ENCODE measurements at regions of chr15 and their contacts with region 1.

Region 1: GRCh38 chr15:83248151-83249029 is 36.1 kb downstream of the BNC1 start:
- DNase-seq: peak; percentile 78
- H3K4me3 ChIP-seq: no peak overlapping the region
- H3K27ac ChIP-seq: no peak overlapping the region
- H3K4me1 ChIP-seq: no peaks in the 10 kb centered on the region
- H3K27me3 ChIP-seq: peaks cover 10 to 16% of the 10 kb centered on the region in 2 experiments
- CTCF ChIP-seq: peak; percentile 54 to 66
- POLR2A ChIP-seq: no peak

Region 2: DNA sequence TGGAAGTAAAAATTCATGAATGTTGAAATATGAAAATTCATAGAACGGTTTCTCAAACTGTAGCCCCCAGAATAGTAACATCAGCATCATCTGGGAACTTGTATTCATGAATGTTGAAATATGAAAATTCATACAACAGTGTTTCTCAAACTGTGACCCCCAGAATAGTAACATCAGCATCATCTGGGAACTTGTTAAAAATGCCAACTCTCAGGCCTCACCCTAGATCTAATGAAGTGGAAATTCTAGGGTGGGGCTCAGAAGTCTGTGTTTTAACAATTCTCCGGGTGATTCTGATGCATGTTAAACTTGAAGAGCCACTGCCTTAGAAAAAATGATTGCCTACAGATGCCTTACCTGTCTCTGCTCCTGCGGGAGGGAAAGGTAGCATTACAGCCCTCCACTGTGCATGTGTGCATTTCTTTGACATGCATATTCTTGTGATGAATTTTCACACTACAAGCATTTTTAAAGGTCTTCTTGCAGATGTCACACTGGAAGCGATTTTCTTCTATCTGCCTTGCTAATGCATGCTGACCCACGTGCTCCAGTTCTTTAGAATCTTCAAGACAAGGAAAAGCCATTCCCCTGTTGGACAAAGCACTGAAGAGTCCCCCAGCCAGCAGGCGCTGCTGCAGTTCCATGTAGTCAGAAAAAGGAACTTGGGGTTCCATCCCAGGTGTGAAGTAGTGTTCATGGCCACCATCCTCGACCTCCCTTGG is 14.4 kb after region 1 on chr15:
- CTCF ChIA-PET with region 1: interaction called, 25 read pairs
- POLR2A ChIA-PET with region 1: no interaction called
- dilution Hi-C with region 1: no loop called
- intact Hi-C with region 1: no loop called
- DNase-seq: no peak
- H3K4me3 ChIP-seq: no peak overlapping the region
- H3K27ac ChIP-seq: no peak overlapping the region
- H3K4me1 ChIP-seq: no peaks in the 10 kb centered on the region
- H3K27me3 ChIP-seq: no peaks in the 10 kb centered on the region
- CTCF ChIP-seq: no peak
- POLR2A ChIP-seq: no peak

Region 3: DNA sequence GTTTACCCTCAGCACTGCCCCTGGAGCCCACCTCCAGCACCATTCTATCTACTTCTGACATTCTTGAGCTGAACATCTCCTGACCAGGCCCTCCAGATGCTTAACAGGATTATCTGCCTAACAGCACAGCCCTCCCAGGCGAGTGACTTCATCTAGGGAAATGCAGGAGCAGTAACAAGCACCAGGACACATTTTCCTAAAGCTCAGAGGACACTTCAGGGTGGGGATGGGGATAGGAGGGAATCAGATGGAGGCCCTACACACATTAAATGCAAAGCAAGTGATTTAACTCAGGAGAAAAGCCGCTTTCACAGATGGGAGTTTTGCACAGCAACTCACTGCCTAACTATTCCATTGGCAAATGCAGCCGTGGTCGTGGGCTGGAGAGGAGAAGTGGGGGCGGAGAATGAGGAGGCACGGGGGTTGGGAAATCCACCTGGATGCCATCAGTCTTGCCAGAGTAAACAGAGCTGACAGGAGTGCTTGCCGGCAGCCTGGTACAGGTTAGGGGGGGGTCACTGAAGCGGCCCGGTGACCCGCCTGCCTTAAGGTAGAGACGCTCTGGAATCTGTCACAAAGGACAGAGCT is 57.4 kb after region 1 on chr15:
- CTCF ChIA-PET with region 1: interaction called, 23 read pairs
- POLR2A ChIA-PET with region 1: no interaction called
- dilution Hi-C with region 1: no loop called
- intact Hi-C with region 1: no loop called
- DNase-seq: no peak
- H3K4me3 ChIP-seq: no peak overlapping the region
- H3K27ac ChIP-seq: no peak overlapping the region
- H3K4me1 ChIP-seq: peaks cover 8% of the 10 kb centered on the region
- H3K27me3 ChIP-seq: no peaks in the 10 kb centered on the region
- CTCF ChIP-seq: no peak
- POLR2A ChIP-seq: no peak

Region 4: GRCh38 chr15:83380682-83381081 is 132.3 kb after region 1 on chr15:
- CTCF ChIA-PET with region 1: interaction called, 108 read pairs
- POLR2A ChIA-PET with region 1: no interaction called
- dilution Hi-C with region 1: no loop called
- intact Hi-C with region 1: loop called (anchors 1 kb)
- DNase-seq: peak; percentile 34
- H3K4me3 ChIP-seq: no peak overlapping the region
- H3K27ac ChIP-seq: no peak overlapping the region
- H3K4me1 ChIP-seq: no peaks in the 10 kb centered on the region
- H3K27me3 ChIP-seq: peaks cover 5 to 16% of the 10 kb centered on the region in 2 experiments
- CTCF ChIP-seq: peak; percentile 23 to 50
- POLR2A ChIP-seq: no peak

Region 5: GRCh38 chr15:83446904-83447709 is 198.7 kb after region 1 on chr15 and contains the start of gene SH3GL3:
- CTCF ChIA-PET with region 1: interaction called, 27 read pairs
- POLR2A ChIA-PET with region 1: no interaction called
- dilution Hi-C with region 1: no loop called
- intact Hi-C with region 1: no loop called
- DNase-seq: peak; percentile 80
- H3K4me3 ChIP-seq: peak within 1 kb of the TSS; percentile 29 to 46 (median 32)
- H3K27ac ChIP-seq: no peak within 1 kb of the TSS
- H3K4me1 ChIP-seq: no peaks in the 10 kb centered on the region
- H3K27me3 ChIP-seq: peaks cover 8 to 19% of the 10 kb centered on the region in 2 experiments
- CTCF ChIP-seq: peak; percentile 7 to 35
- POLR2A ChIP-seq: no peak
- total RNA-seq, gene SH3GL3: not detected in 2 replicates

Region 6: GRCh38 chr15:83571820-83572707 is 323.7 kb after region 1 on chr15:
- CTCF ChIA-PET with region 1: interaction called, 57 read pairs
- POLR2A ChIA-PET with region 1: no interaction called
- dilution Hi-C with region 1: no loop called
- intact Hi-C with region 1: loop called (anchors 1 kb)
- DNase-seq: peak; percentile 28
- H3K4me3 ChIP-seq: no peak overlapping the region
- H3K27ac ChIP-seq: no peak overlapping the region
- H3K4me1 ChIP-seq: no peaks in the 10 kb centered on the region
- H3K27me3 ChIP-seq: no peaks in the 10 kb centered on the region
- CTCF ChIP-seq: peak; percentile 36 to 38
- POLR2A ChIP-seq: no peak